Sigmoid colon (tissue), 7 donors: ENCODE measurements at regions of chr2 and their contacts with region 1.

Region 1: GRCh38 chr2:85635636-85636035 is 19.6 kb downstream of the USP39 start:
- DNase-seq: no peak
- H3K4me3 ChIP-seq: no peak overlapping the region
- H3K27ac ChIP-seq: no peak overlapping the region
- H3K4me1 ChIP-seq: no peaks in the 10 kb centered on the region
- H3K27me3 ChIP-seq: no peaks in the 10 kb centered on the region
- CTCF ChIP-seq: no peak
- EP300 ChIP-seq: no peak
- POLR2A ChIP-seq: no peak

Region 2: DNA sequence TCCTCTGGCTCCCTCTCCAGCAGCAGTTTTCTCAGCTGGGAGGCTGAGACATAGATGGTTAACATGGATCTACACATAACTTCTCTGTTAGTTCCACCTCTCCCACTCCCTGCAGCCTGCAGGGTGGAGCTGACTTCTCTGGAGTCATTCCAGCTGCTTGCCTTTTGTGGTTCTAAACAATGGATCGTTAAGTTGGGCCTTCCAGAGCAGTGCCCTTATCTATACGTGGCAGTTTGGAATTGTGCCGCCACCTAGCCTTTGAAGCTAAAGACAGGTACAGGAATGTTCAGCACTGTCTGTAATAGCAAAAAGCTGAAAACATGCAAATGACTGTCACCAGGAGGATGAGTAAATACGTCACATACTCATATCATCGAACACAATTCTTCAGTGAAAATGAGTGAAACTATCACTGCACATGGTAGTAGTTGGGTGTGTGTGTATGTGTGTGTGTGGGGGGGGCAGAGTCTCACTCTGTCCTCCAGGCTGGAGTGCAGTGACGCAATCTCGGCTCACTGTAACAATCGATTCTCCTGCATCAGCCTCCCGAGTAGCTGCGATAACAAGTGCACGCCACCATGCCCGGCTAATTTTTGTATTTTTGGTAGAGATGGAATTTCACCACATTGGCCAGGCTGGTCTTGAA is 166.8 kb before region 1 on chr2:
- intact Hi-C with region 1: no loop called
- DNase-seq: peak; percentile 54
- H3K4me3 ChIP-seq: no peak overlapping the region
- H3K27ac ChIP-seq: peak overlapping the region in 2 of 4 donors; percentile 25 to 57
- H3K4me1 ChIP-seq: peaks cover 0 to 26% (median 24%) of the 10 kb centered on the region in 4 donors
- H3K27me3 ChIP-seq: no peaks in the 10 kb centered on the region
- CTCF ChIP-seq: no peak
- EP300 ChIP-seq: no peak
- POLR2A ChIP-seq: no peak

Region 3: GRCh38 chr2:85648619-85649018 is 13.0 kb after region 1 on chr2:
- intact Hi-C with region 1: no loop called
- DNase-seq: no peak
- H3K4me3 ChIP-seq: no peak overlapping the region
- H3K27ac ChIP-seq: no peak overlapping the region
- H3K4me1 ChIP-seq: no peaks in the 10 kb centered on the region
- H3K27me3 ChIP-seq: no peaks in the 10 kb centered on the region
- CTCF ChIP-seq: peak in 1 of 4 experiments; percentile 9
- EP300 ChIP-seq: no peak
- POLR2A ChIP-seq: no peak

Region 4: DNA sequence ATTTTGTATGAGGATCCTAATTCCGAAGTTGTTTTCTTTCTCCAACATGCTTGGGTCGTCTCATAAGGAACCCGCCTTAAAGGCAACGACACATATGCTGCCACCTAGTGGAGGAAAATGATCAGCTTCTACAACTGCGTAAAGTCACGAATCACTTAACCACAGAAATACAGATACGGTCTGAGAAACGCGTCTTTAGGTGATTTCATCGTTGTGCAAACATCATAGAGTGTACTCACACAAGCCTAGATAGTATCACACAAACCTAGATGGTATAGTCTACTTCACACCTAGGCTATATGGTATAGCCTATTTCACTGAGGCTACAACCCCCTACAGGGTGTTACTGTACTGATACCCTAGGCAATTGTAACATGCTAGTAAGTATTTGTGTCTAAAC is 71.7 kb after region 1 on chr2:
- intact Hi-C with region 1: loop called (anchors 5 kb)
- DNase-seq: peak; percentile 82
- H3K4me3 ChIP-seq: no peak overlapping the region
- H3K27ac ChIP-seq: peak overlapping the region; percentile 36 to 72 (median 57)
- H3K4me1 ChIP-seq: peaks cover 0 to 9% (median 4%) of the 10 kb centered on the region in 4 donors
- H3K27me3 ChIP-seq: no peaks in the 10 kb centered on the region
- CTCF ChIP-seq: peak; percentile 69 to 81 (median 74)
- EP300 ChIP-seq: no peak
- POLR2A ChIP-seq: no peak

Region 5: GRCh38 chr2:85813982-85814801 is 178.6 kb after region 1 on chr2:
- intact Hi-C with region 1: loop called (anchors 5 kb)
- DNase-seq: peak; percentile 94
- H3K4me3 ChIP-seq: no peak overlapping the region
- H3K27ac ChIP-seq: no peak overlapping the region
- H3K4me1 ChIP-seq: peaks cover 0 to 18% (median 15%) of the 10 kb centered on the region in 4 donors
- H3K27me3 ChIP-seq: no peaks in the 10 kb centered on the region
- CTCF ChIP-seq: peak; percentile 93 to 95 (median 94)
- EP300 ChIP-seq: no peak
- POLR2A ChIP-seq: no peak

Region 6: GRCh38 chr2:86118133-86118532 is 482.5 kb after region 1 on chr2:
- intact Hi-C with region 1: loop called (anchors 10 kb)
- DNase-seq: no peak
- H3K4me3 ChIP-seq: no peak overlapping the region
- H3K27ac ChIP-seq: no peak overlapping the region
- H3K4me1 ChIP-seq: peaks cover 0 to 20% (median 12%) of the 10 kb centered on the region in 4 donors
- H3K27me3 ChIP-seq: no peaks in the 10 kb centered on the region
- CTCF ChIP-seq: no peak
- EP300 ChIP-seq: no peak
- POLR2A ChIP-seq: no peak